PC-3 (cell line): ENCODE measurements at regions of chr21 and their contacts with region 1.

Region 1: GRCh38 chr21:25700741-25701140 is 34.0 kb downstream of the ATP5PF start:
- DNase-seq: peak; percentile 82
- ATAC-seq: peak; percentile 60
- H3K4me3 ChIP-seq: no peak overlapping the region
- H3K27ac ChIP-seq: peak overlapping the region; percentile 76
- H3K4me1 ChIP-seq: peaks cover 28% of the 10 kb centered on the region
- H3K27me3 ChIP-seq: no peaks in the 10 kb centered on the region
- CTCF ChIP-seq: no peak

Region 2: DNA sequence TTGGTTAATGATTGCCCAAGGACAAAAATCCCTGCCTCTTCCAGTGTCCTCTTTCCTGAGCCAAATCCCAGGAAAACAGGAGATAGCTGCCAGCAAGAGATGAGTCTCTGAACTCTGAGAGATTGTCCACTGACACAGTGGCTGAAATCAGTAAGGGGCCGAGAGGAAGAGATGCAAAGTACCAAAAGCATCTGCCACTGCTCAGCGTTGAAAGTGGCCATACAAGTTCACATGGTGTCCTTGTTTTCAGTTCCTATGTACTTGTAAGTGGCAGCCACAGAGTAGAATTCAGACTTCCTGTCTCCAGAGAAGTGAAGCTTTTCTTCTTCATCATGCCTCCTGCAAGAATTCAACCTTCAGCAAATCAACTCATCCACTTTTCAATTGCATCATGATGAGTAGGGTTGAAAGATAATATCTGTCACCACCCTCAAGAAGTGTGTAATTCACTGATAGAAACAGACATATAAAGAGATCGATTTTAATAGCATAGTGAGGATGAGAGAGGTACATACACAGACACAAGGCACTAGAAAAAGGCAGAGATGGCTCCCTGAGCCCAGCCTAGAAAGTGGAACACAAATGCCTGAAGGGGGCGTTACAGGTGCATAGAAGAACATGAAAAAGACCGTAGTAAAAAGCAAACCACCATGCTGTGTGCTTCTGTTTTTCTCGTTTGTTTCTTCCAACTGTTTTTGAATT is 279.3 kb before region 1 on chr21:
- CTCF ChIA-PET with region 1: no interaction called
- POLR2A ChIA-PET with region 1: no interaction called
- intact Hi-C with region 1: loop called (anchors 5 kb)
- DNase-seq: peak; percentile 78
- ATAC-seq: peak; percentile 93
- H3K4me3 ChIP-seq: no peak overlapping the region
- H3K27ac ChIP-seq: no peak overlapping the region
- H3K4me1 ChIP-seq: no peaks in the 10 kb centered on the region
- H3K27me3 ChIP-seq: no peaks in the 10 kb centered on the region
- CTCF ChIP-seq: peak; percentile 81

Region 3: GRCh38 chr21:25717491-25718147 is 16.9 kb after region 1 on chr21:
- CTCF ChIA-PET with region 1: no interaction called
- POLR2A ChIA-PET with region 1: no interaction called
- intact Hi-C with region 1: no loop called
- DNase-seq: peak; percentile 29
- ATAC-seq: peak; percentile 90
- H3K4me3 ChIP-seq: no peak overlapping the region
- H3K27ac ChIP-seq: no peak overlapping the region
- H3K4me1 ChIP-seq: no peaks in the 10 kb centered on the region; the same call in 1 of the 2 replicates
- H3K27me3 ChIP-seq: no peaks in the 10 kb centered on the region
- CTCF ChIP-seq: no peak

Region 4: GRCh38 chr21:25744854-25745253 is 44.1 kb after region 1 on chr21:
- CTCF ChIA-PET with region 1: interaction called, 12 read pairs
- POLR2A ChIA-PET with region 1: no interaction called
- intact Hi-C with region 1: no loop called
- DNase-seq: no peak
- ATAC-seq: no peak
- H3K4me3 ChIP-seq: no peak overlapping the region
- H3K27ac ChIP-seq: no peak overlapping the region
- H3K4me1 ChIP-seq: no peaks in the 10 kb centered on the region
- H3K27me3 ChIP-seq: no peaks in the 10 kb centered on the region
- CTCF ChIP-seq: no peak

Region 5: GRCh38 chr21:25759573-25759972 is 58.8 kb after region 1 on chr21:
- CTCF ChIA-PET with region 1: no interaction called
- POLR2A ChIA-PET with region 1: no interaction called
- intact Hi-C with region 1: no loop called
- DNase-seq: no peak
- ATAC-seq: no peak
- H3K4me3 ChIP-seq: no peak overlapping the region
- H3K27ac ChIP-seq: no peak overlapping the region
- H3K4me1 ChIP-seq: no peaks in the 10 kb centered on the region
- H3K27me3 ChIP-seq: no peaks in the 10 kb centered on the region
- CTCF ChIP-seq: no peak

Region 6: DNA sequence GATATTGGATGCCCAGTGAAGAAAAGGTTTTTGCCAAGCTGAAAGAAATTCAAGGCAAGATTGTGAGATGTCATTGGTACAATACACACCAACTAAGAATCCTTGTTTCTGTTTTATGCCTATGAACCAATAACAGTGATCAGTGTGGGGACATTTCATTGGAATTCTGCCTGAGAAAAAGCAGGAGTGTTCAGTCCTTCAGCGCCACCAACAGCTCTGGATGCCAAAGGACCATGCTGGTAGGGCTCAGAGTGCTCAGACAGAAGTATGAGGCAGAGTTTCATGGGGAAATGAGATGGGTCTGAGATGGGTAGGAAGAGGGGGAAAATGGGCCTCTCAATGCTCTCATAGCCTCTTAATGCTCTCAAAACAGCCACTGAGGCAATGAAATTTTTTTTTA is 90.6 kb after region 1 on chr21:
- CTCF ChIA-PET with region 1: no interaction called
- POLR2A ChIA-PET with region 1: no interaction called
- intact Hi-C with region 1: no loop called
- DNase-seq: peak; percentile 21
- ATAC-seq: no peak
- H3K4me3 ChIP-seq: no peak overlapping the region
- H3K27ac ChIP-seq: no peak overlapping the region
- H3K4me1 ChIP-seq: peaks cover 12% of the 10 kb centered on the region; the same call in 1 of the 2 replicates
- H3K27me3 ChIP-seq: no peaks in the 10 kb centered on the region
- CTCF ChIP-seq: 0 out of 2 replicates have a peak, but pooled peaks have one; percentile 34

Region 7: GRCh38 chr21:25818121-25818520 is 117.4 kb after region 1 on chr21:
- CTCF ChIA-PET with region 1: interaction called, 15 read pairs
- POLR2A ChIA-PET with region 1: no interaction called
- intact Hi-C with region 1: no loop called
- DNase-seq: no peak
- ATAC-seq: no peak
- H3K4me3 ChIP-seq: no peak overlapping the region
- H3K27ac ChIP-seq: no peak overlapping the region
- H3K4me1 ChIP-seq: no peaks in the 10 kb centered on the region
- H3K27me3 ChIP-seq: no peaks in the 10 kb centered on the region
- CTCF ChIP-seq: no peak

Region 8: DNA sequence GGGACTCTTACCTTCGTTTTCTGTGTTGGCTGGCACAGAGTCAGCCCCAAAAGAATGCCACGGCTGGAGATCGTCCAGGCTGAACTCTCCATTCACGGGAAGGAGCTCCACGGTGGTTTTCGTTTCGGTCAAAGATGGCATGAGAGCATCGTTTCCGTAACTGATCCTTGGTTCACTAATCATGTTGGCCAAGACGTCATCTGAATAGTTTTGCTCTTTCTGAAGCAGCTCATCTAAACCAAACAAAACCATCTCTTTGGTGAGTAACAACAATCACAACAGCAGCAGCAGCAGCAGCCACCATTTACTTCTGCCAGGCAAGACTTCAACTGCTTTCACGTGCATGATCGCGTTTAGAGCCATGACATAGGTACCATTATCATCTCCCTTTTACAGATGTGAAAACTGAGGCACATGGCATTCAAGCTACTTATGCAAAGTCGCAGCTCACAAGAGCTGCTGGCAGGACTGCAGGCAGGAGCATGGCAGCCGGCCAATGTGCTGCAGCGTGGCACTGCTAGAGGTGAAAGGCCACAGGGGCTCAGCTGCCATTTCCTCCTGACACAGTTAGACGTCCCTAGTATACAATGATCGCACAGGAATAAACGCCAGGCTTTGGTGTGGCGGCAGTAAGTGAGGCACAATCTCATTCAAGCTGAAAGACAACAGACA is 211.1 kb after region 1 on chr21:
- CTCF ChIA-PET with region 1: no interaction called
- POLR2A ChIA-PET with region 1: no interaction called
- intact Hi-C with region 1: no loop called
- DNase-seq: no peak
- ATAC-seq: no peak
- H3K4me3 ChIP-seq: no peak overlapping the region
- H3K27ac ChIP-seq: no peak overlapping the region
- H3K4me1 ChIP-seq: no peaks in the 10 kb centered on the region
- H3K27me3 ChIP-seq: no peaks in the 10 kb centered on the region
- CTCF ChIP-seq: no peak